ENCODE measurements at regions of chr20 and their contacts with region 1.

Region 1: GRCh38 chr20:11117808-11118528 is 444.2 kb upstream of the JAG1 start:
- DNase-seq: no peak
- ATAC-seq: no peak

Region 2: GRCh38 chr20:11001767-11002540 is 116.0 kb before region 1 on chr20:
- intact Hi-C with region 1: loop called (anchors 10 kb)
- DNase-seq: no peak
- ATAC-seq: peak; percentile 50

Region 3: DNA sequence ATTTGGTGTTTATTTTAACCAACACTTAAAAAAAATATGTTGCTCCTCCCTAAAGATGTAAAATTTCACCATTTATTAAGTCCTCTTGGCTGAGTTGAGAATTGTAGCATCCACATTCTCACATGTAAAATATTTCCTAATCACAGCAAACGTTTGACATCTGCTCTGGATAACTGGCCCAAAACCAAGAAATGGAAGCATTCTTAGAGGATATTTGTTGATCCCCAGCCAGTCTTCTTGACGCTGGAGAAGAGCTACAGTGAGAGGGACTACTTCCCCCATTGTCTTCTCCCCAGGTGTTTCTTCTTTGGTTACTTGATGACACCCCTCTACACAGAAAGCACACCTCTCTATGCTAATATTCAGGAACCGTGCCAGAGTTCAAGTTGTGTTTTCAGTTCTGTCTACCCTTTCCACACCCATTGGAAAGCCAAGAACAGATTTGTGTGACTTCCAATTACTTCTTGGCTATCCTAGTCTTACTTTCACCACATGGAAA is 10.3 kb after region 1 on chr20:
- intact Hi-C with region 1: no loop called
- DNase-seq: no peak
- ATAC-seq: peak; percentile 90

Measured in Right ventricle myocardium inferior (tissue), 1 donor.